Activated CD8-positive, alpha-beta T cell treated with anti-CD3 and anti-CD28 coated beads, Interleukin-2, amount 10 ng/mL, durations not matched to agents 7 days and 5 days (primary cell): ENCODE measurements at regions of chr16 and their contacts with region 1.

Region 1: GRCh38 chr16:74998481-74999218 is at the start of gene ZNRF1:
- DNase-seq: peak; percentile 89
- ATAC-seq: peak; percentile 86
- H3K4me3 Mint-ChIP-seq: peak within 1 kb of the TSS; percentile 79
- H3K27ac Mint-ChIP-seq: peak within 1 kb of the TSS; percentile 78
- H3K4me1 Mint-ChIP-seq: peaks cover 23% of the 10 kb centered on the region
- H3K27me3 Mint-ChIP-seq: peaks cover 25% of the 10 kb centered on the region
- total RNA-seq, gene ZNRF1: 8.5 to 11.1 TPM

Region 2: GRCh38 chr16:74984535-74985296 is 13.9 kb before region 1 on chr16 and contains the start of gene WDR59:
- CTCF ChIA-PET with region 1: interaction called, 15 read pairs
- POLR2A ChIA-PET with region 1: interaction called, 5 read pairs
- DNase-seq: peak; percentile 100
- ATAC-seq: peak; percentile 100
- H3K4me3 Mint-ChIP-seq: peak within 1 kb of the TSS; percentile 90
- H3K27ac Mint-ChIP-seq: peak within 1 kb of the TSS; percentile 93
- H3K4me1 Mint-ChIP-seq: peaks cover 21% of the 10 kb centered on the region
- H3K27me3 Mint-ChIP-seq: no peaks in the 10 kb centered on the region
- total RNA-seq, gene WDR59: 58.3 to 63.5 TPM